ENCODE measurements at regions of chr11 and their contacts with region 1.

Region 1: GRCh38 chr11:69022260-69022659 is 9.2 kb upstream of the MRGPRF start:
- DNase-seq: no peak
- ATAC-seq: no peak
- H3K4me3 ChIP-seq: no peak overlapping the region
- H3K27ac ChIP-seq: no peak overlapping the region
- H3K4me1 ChIP-seq: no peaks in the 10 kb centered on the region
- H3K27me3 ChIP-seq: no peaks in the 10 kb centered on the region
- CTCF ChIP-seq: no peak

Region 2: DNA sequence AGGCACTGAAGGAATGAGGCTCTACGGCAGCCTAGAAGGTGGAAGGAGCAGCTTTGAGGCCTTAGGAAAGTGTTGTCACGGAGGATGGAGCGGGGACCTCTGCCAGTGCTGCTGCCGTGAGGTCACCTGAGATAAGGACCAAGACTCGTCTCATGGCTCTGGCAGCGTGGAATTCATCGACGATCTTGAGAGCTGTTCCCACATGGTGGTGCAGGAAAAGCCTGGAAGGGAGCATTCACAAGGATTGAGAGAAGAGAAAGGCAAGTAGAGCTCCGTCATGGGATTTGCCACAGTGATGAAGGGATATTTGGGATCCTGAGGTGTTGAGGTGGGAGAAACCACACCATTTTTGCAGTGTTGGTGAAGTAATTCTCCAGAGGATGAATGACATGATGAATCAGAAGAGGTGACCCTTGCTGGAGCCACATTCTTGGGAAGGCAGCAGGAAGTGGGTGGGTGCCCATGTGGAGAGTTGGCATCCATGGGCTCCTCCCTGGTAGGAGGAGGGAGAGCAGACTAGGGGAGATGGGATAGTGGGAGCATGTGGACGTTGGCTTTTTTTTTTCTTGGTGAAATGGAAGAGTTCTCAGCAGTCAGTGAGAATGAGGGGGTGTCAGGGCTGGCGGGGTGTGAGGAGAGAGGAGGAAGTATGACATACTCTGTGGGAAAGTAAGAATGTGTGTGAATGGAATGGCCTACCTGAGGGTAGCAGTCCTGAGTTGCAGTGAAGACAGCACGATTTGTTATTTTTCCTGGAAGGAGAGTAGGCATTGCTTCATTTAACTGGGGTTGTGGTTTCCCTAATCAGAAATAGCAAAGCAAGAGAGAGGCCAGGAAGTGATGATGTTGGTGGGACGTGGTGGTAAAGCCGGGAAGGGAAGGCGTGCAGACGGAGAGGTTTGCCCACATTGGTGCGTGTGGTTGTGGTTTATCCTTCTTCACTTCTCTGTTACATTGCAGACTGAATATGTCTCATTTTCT is 550.6 kb before region 1 on chr11:
- CTCF ChIA-PET with region 1: no interaction called
- POLR2A ChIA-PET with region 1: no interaction called
- in situ Hi-C with region 1: no loop called
- intact Hi-C with region 1: no loop called
- DNase-seq: no peak
- ATAC-seq: peak; percentile 43
- H3K4me3 ChIP-seq: no peak overlapping the region
- H3K27ac ChIP-seq: no peak overlapping the region
- H3K4me1 ChIP-seq: peaks cover 22% of the 10 kb centered on the region
- H3K27me3 ChIP-seq: no peaks in the 10 kb centered on the region
- CTCF ChIP-seq: no peak

Region 3: DNA sequence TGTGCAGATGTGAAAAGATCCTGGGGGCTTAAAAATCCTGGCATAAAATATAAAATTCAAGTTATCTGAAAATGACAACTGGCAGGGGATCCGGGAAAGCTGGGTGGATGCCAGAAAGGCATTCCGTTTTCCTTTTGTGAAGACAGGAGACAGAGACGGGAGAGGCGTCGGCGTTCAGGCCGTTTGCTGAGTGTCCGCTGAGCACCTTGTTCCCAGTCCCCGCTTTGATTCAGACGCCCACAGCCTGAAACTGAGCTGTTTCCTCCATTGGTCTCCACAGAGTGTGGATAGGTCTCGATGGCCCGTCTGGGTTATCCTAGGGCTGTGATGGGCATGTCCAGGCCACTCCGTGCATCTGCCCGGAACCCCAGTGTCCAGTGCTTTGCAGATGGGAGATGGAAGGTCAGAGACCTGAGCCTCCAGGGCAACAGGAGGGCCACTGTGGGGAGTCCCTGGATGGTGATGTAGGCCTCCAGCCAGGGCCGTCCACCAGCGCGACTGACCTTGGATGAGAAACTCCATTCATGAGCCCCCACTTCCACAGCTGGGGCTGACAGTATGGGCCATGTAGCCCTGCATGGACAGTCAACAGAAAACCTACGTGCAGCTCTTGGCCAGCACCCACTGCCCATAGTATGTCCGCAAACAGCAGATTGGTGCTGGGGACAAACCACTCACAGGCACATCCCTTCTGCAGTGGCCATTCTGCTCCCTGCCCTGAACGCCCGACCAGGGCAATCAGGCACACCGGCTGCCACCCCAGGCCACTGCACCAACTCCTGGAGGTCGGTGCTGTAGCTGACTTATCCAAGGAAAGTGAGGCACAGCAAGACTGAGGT is 20.8 kb before region 1 on chr11:
- CTCF ChIA-PET with region 1: no interaction called
- POLR2A ChIA-PET with region 1: interaction called, 10 read pairs
- in situ Hi-C with region 1: no loop called
- intact Hi-C with region 1: no loop called
- DNase-seq: no peak
- ATAC-seq: no peak
- H3K4me3 ChIP-seq: no peak overlapping the region
- H3K27ac ChIP-seq: no peak overlapping the region
- H3K4me1 ChIP-seq: peaks cover 7% of the 10 kb centered on the region
- H3K27me3 ChIP-seq: no peaks in the 10 kb centered on the region
- CTCF ChIP-seq: no peak

Measured in Panc1 (cell line).